Posterior vena cava (tissue), 2 donors: ENCODE measurements at regions of chr12 and their contacts with region 1.

Region 1: GRCh38 chr12:112496496-112496895 is 77.7 kb downstream of the PTPN11 start:
- DNase-seq: no peak

Region 2: GRCh38 chr12:112516306-112516705 is 19.8 kb after region 1 on chr12:
- intact Hi-C with region 1: loop called in 1 of 2 experiments (anchors 2 kb)
- DNase-seq: no peak